ENCODE measurements at regions of chr19 and their contacts with region 1.

Region 1: DNA sequence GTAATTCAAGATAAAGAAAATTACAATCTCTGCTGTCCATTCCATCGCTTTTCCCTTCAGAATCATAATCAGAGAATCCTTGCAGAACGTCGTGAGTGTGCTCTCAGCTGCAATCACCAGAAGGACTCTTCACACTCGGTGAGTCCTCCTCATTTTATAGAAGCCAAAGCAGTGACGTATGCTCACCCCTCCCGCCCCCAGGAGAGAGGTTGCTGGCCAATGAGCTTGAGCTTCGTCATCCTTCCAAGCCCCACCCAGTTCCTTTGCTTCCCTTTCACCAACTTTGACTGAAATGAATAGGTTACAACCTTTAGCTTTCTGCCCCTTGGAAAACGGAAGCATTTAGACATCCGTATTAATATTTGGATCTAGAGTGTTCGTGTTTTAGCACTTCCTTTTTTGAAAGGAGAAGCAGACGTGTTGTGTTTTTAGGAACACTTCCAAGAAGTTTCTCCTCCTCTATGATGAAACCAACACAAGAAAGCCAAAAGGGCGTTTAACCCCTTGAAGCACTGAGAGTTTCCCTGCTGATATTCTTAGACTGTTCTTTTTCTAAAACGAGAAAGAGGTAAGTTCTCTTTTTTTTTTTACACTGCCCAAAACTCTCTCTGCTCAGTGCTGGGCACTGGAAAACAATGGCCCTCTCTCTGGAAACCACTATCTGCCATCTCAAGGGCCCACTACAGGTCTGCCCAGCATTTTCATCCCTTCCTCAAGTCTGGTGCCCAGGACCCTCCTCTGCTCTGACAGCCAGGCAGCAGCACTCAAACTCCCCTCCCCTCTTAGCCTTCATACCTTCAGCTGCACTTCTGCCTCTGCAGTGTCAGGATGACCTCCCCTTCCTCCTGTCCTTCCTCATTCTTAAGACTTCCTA is 44.3 kb upstream of the CEACAM21 start:
- DNase-seq: peak; percentile 92
- ATAC-seq: peak; percentile 79
- H3K4me3 ChIP-seq: peak overlapping the region; percentile 37 to 67 (median 52)
- H3K4me3 Mint-ChIP-seq: peak overlapping the region; percentile 80
- H3K27ac ChIP-seq: peak overlapping the region; percentile 72 to 83
- H3K27ac Mint-ChIP-seq: peak overlapping the region; percentile 88
- H3K4me1 ChIP-seq: peaks cover 64 to 78% of the 10 kb centered on the region in 2 donors
- H3K4me1 Mint-ChIP-seq: peaks cover 83% of the 10 kb centered on the region
- H3K27me3 ChIP-seq: no peaks in the 10 kb centered on the region
- H3K27me3 Mint-ChIP-seq: no peaks in the 10 kb centered on the region
- CTCF ChIP-seq: no peak

Region 2: DNA sequence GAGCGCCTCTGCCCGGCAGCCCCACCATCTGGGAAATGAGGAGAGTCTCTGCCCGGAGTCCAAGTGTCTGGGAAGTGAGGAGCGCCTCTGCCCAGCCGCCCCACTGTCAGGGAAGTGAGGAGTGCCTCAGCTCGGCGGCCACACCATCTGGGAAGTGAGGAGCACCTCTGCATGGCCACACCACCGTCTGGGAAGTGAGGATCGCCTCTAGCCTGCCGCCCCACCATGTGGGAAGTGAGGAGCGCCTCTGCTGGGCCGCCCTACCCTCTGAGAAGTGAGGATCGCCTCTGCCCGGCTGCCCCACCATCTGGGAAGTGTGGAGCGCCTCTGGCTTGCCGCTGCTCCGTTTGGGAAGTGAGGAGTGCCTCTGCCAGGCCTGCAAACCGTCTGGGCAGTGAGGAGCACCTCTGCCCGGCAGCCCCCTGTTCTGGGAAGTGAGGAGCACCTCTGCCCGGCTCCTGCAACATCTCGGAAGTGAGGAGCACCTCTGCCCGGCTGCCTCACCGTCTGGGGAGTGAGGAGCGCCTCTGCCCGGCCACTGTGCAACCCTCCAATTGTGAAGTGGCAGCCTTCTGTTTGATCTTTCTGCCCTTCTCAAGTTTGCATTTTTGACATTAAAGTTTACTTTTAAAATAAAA is 16.5 kb before region 1 on chr19:
- CTCF ChIA-PET with region 1: interaction called, 4 read pairs
- POLR2A ChIA-PET with region 1: interaction called, 4 read pairs
- intact Hi-C with region 1: loop called (anchors 1 kb)
- DNase-seq: no peak
- ATAC-seq: no peak
- H3K4me3 ChIP-seq: no peak overlapping the region
- H3K4me3 Mint-ChIP-seq: no peak overlapping the region
- H3K27ac ChIP-seq: no peak overlapping the region
- H3K27ac Mint-ChIP-seq: no peak overlapping the region
- H3K4me1 ChIP-seq: peaks cover 15 to 17% of the 10 kb centered on the region in 2 donors
- H3K4me1 Mint-ChIP-seq: peaks cover 18% of the 10 kb centered on the region
- H3K27me3 ChIP-seq: peaks cover 0 to 5% (median 2%) of the 10 kb centered on the region in 4 experiments
- H3K27me3 Mint-ChIP-seq: peaks cover 11% of the 10 kb centered on the region
- CTCF ChIP-seq: no peak

Region 3: GRCh38 chr19:41541990-41542584 is 10.4 kb after region 1 on chr19:
- CTCF ChIA-PET with region 1: interaction called, 13 read pairs
- POLR2A ChIA-PET with region 1: interaction called, 3 read pairs
- intact Hi-C with region 1: no loop called
- DNase-seq: peak; percentile 84
- ATAC-seq: peak; percentile 28
- H3K4me3 ChIP-seq: peak overlapping the region in 1 of 5 experiments; percentile 11
- H3K4me3 Mint-ChIP-seq: peak overlapping the region; percentile 66
- H3K27ac ChIP-seq: no peak overlapping the region
- H3K27ac Mint-ChIP-seq: peak overlapping the region; percentile 54
- H3K4me1 ChIP-seq: peaks cover 43 to 45% of the 10 kb centered on the region in 2 donors
- H3K4me1 Mint-ChIP-seq: peaks cover 55% of the 10 kb centered on the region
- H3K27me3 ChIP-seq: no peaks in the 10 kb centered on the region
- H3K27me3 Mint-ChIP-seq: no peaks in the 10 kb centered on the region
- CTCF ChIP-seq: peak; percentile 88

Region 4: GRCh38 chr19:41548954-41549688 is 17.4 kb after region 1 on chr19:
- CTCF ChIA-PET with region 1: interaction called, 13 read pairs
- POLR2A ChIA-PET with region 1: interaction called, 8 read pairs
- intact Hi-C with region 1: loop called (anchors 1 kb)
- DNase-seq: peak; percentile 81
- ATAC-seq: peak; percentile 59
- H3K4me3 ChIP-seq: peak overlapping the region; percentile 63 to 98 (median 77)
- H3K4me3 Mint-ChIP-seq: peak overlapping the region; percentile 96
- H3K27ac ChIP-seq: peak overlapping the region; percentile 57 to 92
- H3K27ac Mint-ChIP-seq: peak overlapping the region; percentile 98
- H3K4me1 ChIP-seq: peaks cover 66 to 73% of the 10 kb centered on the region in 2 donors
- H3K4me1 Mint-ChIP-seq: peaks cover 71% of the 10 kb centered on the region
- H3K27me3 ChIP-seq: no peaks in the 10 kb centered on the region
- H3K27me3 Mint-ChIP-seq: no peaks in the 10 kb centered on the region
- CTCF ChIP-seq: no peak